GM12878 (cell line): ENCODE measurements at regions of chr10 and their contacts with region 1.

Region 1: GRCh38 chr10:30639946-30640786 is 10.6 kb upstream of the LYZL2 start:
- DNase-seq: no peak
- ATAC-seq: peak; percentile 37; the same call in 1 of the 3 replicates
- H3K4me3 ChIP-seq: no peak overlapping the region
- H3K27ac ChIP-seq: no peak overlapping the region
- H3K4me1 ChIP-seq: no peaks in the 10 kb centered on the region
- H3K27me3 ChIP-seq: peaks cover 0 to 1% of the 10 kb centered on the region in 2 experiments; a peak in 3 of 4 replicates
- CTCF ChIP-seq: peak; percentile 78 to 81 (median 81)
- EP300 ChIP-seq: no peak
- POLR2A ChIP-seq: no peak
- RAD21 ChIP-seq: peak; percentile 56

Region 2: DNA sequence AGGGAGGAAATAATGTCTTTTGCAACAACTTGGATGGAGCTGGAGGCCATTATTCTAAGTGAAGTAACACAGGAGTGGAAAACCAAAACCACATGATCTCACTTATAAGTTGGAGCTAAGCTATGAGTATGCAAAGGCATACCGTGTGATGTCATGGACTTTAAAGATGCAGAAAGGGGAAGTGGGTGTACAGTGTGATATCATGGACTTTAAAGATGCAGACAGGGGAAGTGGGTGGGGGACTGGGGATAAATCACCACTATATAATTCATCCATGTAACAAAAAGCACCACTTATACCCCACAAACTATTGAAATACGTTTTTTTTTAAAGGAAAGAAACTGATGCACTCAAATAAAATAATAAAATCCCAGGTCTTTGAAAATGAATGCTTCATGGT is 40.2 kb before region 1 on chr10:
- CTCF ChIA-PET with region 1: interaction called, 10 read pairs
- POLR2A ChIA-PET with region 1: no interaction called
- RAD21 ChIA-PET with region 1: no interaction called
- SMC1A ChIA-PET with region 1: no interaction called
- in situ Hi-C with region 1: no loop called
- intact Hi-C with region 1: no loop called
- DNase-seq: no peak
- ATAC-seq: peak; percentile 86
- H3K4me3 ChIP-seq: no peak overlapping the region
- H3K27ac ChIP-seq: no peak overlapping the region
- H3K4me1 ChIP-seq: no peaks in the 10 kb centered on the region
- H3K27me3 ChIP-seq: no peaks in the 10 kb centered on the region
- CTCF ChIP-seq: no peak
- EP300 ChIP-seq: no peak
- POLR2A ChIP-seq: no peak
- RAD21 ChIP-seq: no peak

Region 3: GRCh38 chr10:30656233-30656632 is 16.1 kb after region 1 on chr10:
- CTCF ChIA-PET with region 1: interaction called, 15 read pairs
- POLR2A ChIA-PET with region 1: no interaction called
- RAD21 ChIA-PET with region 1: no interaction called
- SMC1A ChIA-PET with region 1: interaction called, 4 read pairs
- in situ Hi-C with region 1: no loop called
- intact Hi-C with region 1: no loop called
- DNase-seq: no peak
- ATAC-seq: no peak
- H3K4me3 ChIP-seq: no peak overlapping the region
- H3K27ac ChIP-seq: no peak overlapping the region
- H3K4me1 ChIP-seq: no peaks in the 10 kb centered on the region
- H3K27me3 ChIP-seq: no peaks in the 10 kb centered on the region
- CTCF ChIP-seq: no peak
- EP300 ChIP-seq: no peak
- POLR2A ChIP-seq: no peak
- RAD21 ChIP-seq: no peak

Region 4: DNA sequence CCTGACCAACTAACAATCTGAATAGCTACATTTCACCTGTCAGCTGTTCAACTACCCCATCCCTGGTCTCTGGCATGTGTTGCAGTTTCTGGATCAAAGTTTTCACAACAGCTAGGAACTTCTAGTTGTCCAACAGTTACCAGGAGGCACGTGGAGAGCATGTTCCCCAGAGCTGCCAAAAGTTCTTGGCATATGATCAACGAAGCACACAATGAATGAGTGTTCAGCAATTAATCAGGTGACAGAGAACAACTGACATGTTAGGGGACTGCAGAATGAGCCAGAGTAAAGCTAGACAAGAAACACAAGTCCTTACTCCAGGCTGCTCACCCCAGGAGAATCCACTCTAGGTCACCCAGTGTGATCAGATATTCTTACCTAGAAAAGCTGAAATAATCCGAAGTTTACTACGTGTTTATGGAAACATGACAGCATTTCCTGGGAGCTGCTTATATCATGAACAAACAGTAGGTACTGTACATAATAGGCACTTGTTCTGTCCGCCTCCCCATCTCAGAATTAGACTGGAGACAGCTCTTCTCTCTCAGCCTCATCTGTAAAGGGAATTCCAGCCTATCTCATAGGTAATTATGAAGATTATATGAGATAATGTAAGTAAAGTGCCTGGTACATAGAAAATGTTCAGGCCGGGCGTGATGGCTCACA is 340.9 kb after region 1 on chr10:
- CTCF ChIA-PET with region 1: no interaction called
- POLR2A ChIA-PET with region 1: no interaction called
- RAD21 ChIA-PET with region 1: no interaction called
- SMC1A ChIA-PET with region 1: no interaction called
- in situ Hi-C with region 1: no loop called
- intact Hi-C with region 1: no loop called
- DNase-seq: no peak
- ATAC-seq: no peak
- H3K4me3 ChIP-seq: no peak overlapping the region
- H3K27ac ChIP-seq: no peak overlapping the region
- H3K4me1 ChIP-seq: no peaks in the 10 kb centered on the region
- H3K27me3 ChIP-seq: no peaks in the 10 kb centered on the region
- CTCF ChIP-seq: no peak
- EP300 ChIP-seq: no peak
- POLR2A ChIP-seq: no peak
- RAD21 ChIP-seq: no peak